Prostate gland (tissue), 2 donors: ENCODE measurements at regions of chr1 and their contacts with region 1.

Region 1: DNA sequence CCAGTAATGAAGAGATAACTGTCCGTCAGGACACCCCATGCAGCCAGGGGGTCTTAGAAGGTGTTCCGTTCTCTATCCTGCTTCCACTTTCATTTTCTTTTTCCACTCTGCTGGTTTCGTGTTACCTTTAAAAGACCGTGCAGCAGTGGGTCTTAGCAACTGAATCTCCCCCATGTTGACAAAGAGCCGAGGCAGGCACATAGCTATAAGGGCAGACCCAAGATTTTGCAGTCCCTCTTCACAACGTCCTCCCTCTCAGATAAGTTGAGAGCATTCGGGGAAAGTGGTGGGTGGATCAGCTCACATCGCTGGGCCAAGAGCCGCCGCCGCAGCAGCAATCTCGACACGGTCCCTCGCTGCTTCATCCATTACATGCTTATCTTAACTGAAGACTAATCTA is 355.5 kb downstream of the LMO4 start:
- DNase-seq: peak; percentile 5
- H3K4me3 ChIP-seq: peak overlapping the region; percentile 18 to 32
- H3K27ac ChIP-seq: peak overlapping the region; percentile 47 to 63
- H3K4me1 ChIP-seq: no peaks in the 10 kb centered on the region
- H3K27me3 ChIP-seq: no peaks in the 10 kb centered on the region
- CTCF ChIP-seq: no peak
- POLR2A ChIP-seq: no peak

Region 2: GRCh38 chr1:87335175-87335884 is 348.9 kb before region 1 on chr1:
- intact Hi-C with region 1: loop called (anchors 10 kb)
- DNase-seq: peak; percentile 43
- H3K4me3 ChIP-seq: peak overlapping the region; percentile 58 to 70
- H3K27ac ChIP-seq: peak overlapping the region; percentile 77 to 81
- H3K4me1 ChIP-seq: no peaks in the 10 kb centered on the region
- H3K27me3 ChIP-seq: no peaks in the 10 kb centered on the region
- CTCF ChIP-seq: peak in 2 of 4 experiments; percentile 13 to 49
- POLR2A ChIP-seq: no peak

Region 3: DNA sequence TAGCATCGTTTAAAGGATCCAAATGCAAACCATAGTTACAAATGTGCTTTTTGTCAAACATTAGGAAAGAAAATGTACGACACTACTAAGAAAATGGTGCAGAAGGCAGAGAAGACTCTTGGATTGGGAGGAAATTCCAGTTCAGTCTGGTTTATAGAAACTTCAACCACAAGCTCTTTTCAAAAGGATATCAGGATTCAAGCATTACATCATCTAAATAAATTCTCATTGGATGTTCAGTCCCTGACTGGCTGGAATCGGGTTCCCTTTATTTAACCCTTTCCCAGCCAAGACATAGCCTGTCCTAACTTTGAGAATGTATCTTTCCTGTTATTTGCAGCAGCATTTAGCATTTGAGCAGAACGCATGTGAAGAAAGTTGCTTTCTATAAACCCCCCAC is 170.9 kb before region 1 on chr1:
- intact Hi-C with region 1: no loop called
- DNase-seq: no peak
- H3K4me3 ChIP-seq: no peak overlapping the region
- H3K27ac ChIP-seq: no peak overlapping the region
- H3K4me1 ChIP-seq: no peaks in the 10 kb centered on the region
- H3K27me3 ChIP-seq: no peaks in the 10 kb centered on the region
- CTCF ChIP-seq: no peak
- POLR2A ChIP-seq: no peak

Region 4: GRCh38 chr1:87632232-87632631 is 52.0 kb before region 1 on chr1:
- intact Hi-C with region 1: no loop called
- DNase-seq: no peak
- H3K4me3 ChIP-seq: no peak overlapping the region
- H3K27ac ChIP-seq: no peak overlapping the region
- H3K4me1 ChIP-seq: no peaks in the 10 kb centered on the region
- H3K27me3 ChIP-seq: no peaks in the 10 kb centered on the region
- CTCF ChIP-seq: no peak
- POLR2A ChIP-seq: no peak